Activated CD4-positive, alpha-beta memory T cell treated with anti-CD3 and anti-CD28 coated beads for 36 hours (primary cell): ENCODE measurements at regions of chr12 and their contacts with region 1.

Region 1: GRCh38 chr12:4030929-4031702 is 157.9 kb upstream of the PARP11 start:
- DNase-seq: peak; percentile 82
- H3K4me3 Mint-ChIP-seq: peak overlapping the region; percentile 57
- H3K27ac Mint-ChIP-seq: no peak overlapping the region
- H3K4me1 Mint-ChIP-seq: peaks cover 34% of the 10 kb centered on the region
- H3K27me3 Mint-ChIP-seq: no peaks in the 10 kb centered on the region

Region 2: GRCh38 chr12:3988519-3989448 is 42.3 kb before region 1 on chr12:
- CTCF ChIA-PET with region 1: no interaction called
- POLR2A ChIA-PET with region 1: no interaction called
- intact Hi-C with region 1: loop called (anchors 5 kb)
- DNase-seq: peak; percentile 57
- H3K4me3 Mint-ChIP-seq: no peak overlapping the region
- H3K27ac Mint-ChIP-seq: peak overlapping the region; percentile 47
- H3K4me1 Mint-ChIP-seq: peaks cover 30% of the 10 kb centered on the region
- H3K27me3 Mint-ChIP-seq: no peaks in the 10 kb centered on the region